PC-3 (cell line): ENCODE measurements at regions of chr20 and their contacts with region 1.

Region 1: GRCh38 chr20:56358596-56359211 is at the start of gene FAM210B:
- DNase-seq: peak; percentile 99
- ATAC-seq: peak; percentile 90
- H3K4me3 ChIP-seq: peak within 1 kb of the TSS; percentile 95
- H3K27ac ChIP-seq: peak within 1 kb of the TSS; percentile 25
- H3K4me1 ChIP-seq: peaks cover 20% of the 10 kb centered on the region
- H3K27me3 ChIP-seq: no peaks in the 10 kb centered on the region
- CTCF ChIP-seq: no peak
- total RNA-seq, gene FAM210B: 27.8 and 37.9 TPM in 2 replicates

Region 2: DNA sequence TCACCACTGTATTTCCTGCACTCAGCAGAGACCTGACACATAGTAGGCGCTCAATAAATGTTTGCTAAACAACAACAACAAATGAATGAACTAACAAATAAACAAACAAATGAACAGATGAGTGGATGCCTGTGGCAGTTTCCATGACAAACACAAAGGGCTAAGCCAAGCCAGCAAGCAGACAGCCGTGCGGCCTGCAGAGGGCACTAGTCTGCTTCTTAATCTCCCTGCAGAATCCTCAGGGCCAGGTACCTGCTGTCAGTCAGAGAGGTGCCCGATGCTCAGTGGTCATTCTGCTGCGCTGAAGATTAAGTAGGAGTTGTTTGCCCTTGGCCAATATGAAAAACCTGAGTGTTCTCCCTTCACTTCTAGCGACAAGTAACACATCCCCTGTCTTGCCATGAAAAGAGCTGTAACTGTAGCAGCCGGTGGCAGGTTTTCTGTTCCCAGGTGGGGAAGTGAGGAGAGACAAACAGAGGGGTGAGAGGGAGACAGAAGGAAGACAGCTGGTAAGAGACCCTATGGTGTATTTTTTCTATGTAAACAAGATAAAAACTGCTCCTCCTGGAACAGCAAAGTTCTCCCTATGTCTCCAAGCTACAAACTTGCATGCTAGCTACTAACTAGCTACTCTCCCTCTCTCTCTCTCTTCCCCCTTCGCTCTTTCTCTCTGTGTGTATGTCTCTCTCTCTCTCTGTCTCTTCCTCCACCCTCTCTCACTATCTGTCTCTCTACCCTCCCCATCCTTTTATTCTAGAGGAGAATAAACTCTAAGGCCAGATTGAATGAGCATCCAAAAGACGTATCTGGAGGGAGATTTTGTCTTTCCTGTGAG is 110.5 kb before region 1 on chr20 and contains the start of gene MC3R:
- CTCF ChIA-PET with region 1: no interaction called
- POLR2A ChIA-PET with region 1: no interaction called
- intact Hi-C with region 1: loop called (anchors 5 kb)
- DNase-seq: peak; percentile 79
- ATAC-seq: peak; percentile 99
- H3K4me3 ChIP-seq: no peak within 1 kb of the TSS
- H3K27ac ChIP-seq: no peak within 1 kb of the TSS
- H3K4me1 ChIP-seq: no peaks in the 10 kb centered on the region
- H3K27me3 ChIP-seq: peaks cover 41% of the 10 kb centered on the region
- CTCF ChIP-seq: peak; percentile 98
- total RNA-seq, gene MC3R: not detected in 2 replicates

Region 3: DNA sequence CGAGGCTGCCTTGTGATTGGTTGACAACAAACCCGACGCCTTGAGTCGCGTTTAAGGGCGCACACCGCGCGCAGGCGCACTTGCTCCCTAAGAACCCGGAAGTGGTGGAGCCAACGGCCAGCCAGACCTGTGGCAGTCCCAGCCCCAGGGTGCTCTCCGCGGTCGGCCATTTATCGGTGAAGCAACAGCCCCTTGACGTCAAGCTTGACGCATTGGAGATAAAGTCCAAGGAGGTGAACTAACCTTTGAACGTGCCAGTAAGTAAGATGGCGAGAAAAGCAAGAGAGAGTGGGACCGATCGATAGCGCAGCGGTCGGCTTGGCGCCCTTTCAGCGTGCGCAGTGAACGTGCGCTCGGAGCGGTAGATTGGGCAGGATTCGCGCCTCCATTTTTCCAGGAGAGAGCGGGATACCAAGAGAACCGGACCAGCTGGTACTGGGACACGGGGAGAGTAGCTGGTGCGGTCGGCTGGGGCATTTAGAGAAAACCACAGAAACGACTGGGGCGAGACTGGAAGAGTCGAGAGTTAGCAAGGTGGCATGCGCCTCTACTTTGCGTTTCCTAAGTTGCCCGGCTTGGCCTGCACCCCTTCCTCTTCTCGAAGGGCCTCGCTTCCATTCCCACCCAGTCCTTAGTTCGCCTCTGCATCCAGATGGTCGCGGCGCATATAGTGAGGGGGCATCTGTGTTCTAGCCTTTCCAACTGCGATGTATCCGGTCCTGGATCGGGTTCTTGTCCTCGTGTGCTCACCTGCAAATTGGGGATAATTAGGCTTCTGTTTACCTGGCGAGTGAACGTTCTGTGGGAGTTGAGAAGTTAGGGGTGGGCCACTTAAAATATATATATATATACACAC is 33.8 kb after region 1 on chr20 and contains the start of gene CSTF1:
- CTCF ChIA-PET with region 1: no interaction called
- POLR2A ChIA-PET with region 1: interaction called, 6 read pairs
- intact Hi-C with region 1: loop called (anchors 1 kb)
- DNase-seq: peak; percentile 100
- ATAC-seq: peak; percentile 94
- H3K4me3 ChIP-seq: peak within 1 kb of the TSS; percentile 87
- H3K27ac ChIP-seq: peak within 1 kb of the TSS; percentile 81
- H3K4me1 ChIP-seq: peaks cover 24% of the 10 kb centered on the region
- H3K27me3 ChIP-seq: no peaks in the 10 kb centered on the region
- CTCF ChIP-seq: no peak
- total RNA-seq, gene CSTF1: 48.9 and 60.2 TPM in 2 replicates

Region 4: DNA sequence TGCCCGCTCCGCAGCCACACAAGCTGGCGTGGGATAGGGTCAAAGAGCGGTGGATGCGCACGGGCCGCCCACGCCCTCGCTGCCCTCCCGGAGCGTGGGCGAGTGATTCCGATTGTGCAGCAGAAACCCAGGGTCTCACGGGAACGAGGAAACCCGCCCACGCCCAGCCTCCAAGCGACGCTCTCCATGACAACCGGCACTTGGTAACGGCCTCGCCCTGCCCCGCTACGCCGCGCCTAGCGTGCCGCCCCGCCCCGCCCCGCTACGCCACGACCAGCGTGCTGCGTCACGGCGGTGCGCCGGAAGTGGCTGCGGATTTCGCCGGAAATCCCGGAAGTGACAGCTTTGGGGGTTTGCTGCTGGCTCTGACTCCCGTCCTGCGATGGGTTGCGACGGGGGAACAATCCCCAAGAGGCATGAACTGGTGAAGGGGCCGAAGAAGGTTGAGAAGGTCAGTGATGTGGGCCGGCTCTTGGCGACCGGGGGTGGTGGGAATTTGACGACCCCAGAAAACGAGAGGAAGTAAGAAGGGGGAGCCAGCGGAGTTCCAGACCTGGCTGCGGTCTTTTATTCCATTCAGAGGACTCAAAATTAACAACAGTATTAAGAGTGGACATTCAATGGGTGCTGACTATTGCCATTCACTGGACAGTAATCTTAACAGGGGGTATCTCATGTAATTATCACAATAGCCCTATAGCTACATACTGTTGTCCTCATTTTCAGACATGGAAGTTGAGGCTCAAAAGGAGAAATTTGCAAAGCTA is 109.8 kb after region 1 on chr20 and contains the start of gene RTF2:
- CTCF ChIA-PET with region 1: no interaction called
- POLR2A ChIA-PET with region 1: no interaction called
- intact Hi-C with region 1: loop called (anchors 2 kb)
- DNase-seq: peak; percentile 97
- ATAC-seq: peak; percentile 100
- H3K4me3 ChIP-seq: peak within 1 kb of the TSS; percentile 88
- H3K27ac ChIP-seq: no peak within 1 kb of the TSS
- H3K4me1 ChIP-seq: peaks cover 17% of the 10 kb centered on the region
- H3K27me3 ChIP-seq: peaks cover 3% of the 10 kb centered on the region
- CTCF ChIP-seq: no peak
- total RNA-seq, gene RTF2: 122 and 149 TPM in 2 replicates